H1 (cell line): ENCODE measurements at regions of chr2 and their contacts with region 1.

Region 1: DNA sequence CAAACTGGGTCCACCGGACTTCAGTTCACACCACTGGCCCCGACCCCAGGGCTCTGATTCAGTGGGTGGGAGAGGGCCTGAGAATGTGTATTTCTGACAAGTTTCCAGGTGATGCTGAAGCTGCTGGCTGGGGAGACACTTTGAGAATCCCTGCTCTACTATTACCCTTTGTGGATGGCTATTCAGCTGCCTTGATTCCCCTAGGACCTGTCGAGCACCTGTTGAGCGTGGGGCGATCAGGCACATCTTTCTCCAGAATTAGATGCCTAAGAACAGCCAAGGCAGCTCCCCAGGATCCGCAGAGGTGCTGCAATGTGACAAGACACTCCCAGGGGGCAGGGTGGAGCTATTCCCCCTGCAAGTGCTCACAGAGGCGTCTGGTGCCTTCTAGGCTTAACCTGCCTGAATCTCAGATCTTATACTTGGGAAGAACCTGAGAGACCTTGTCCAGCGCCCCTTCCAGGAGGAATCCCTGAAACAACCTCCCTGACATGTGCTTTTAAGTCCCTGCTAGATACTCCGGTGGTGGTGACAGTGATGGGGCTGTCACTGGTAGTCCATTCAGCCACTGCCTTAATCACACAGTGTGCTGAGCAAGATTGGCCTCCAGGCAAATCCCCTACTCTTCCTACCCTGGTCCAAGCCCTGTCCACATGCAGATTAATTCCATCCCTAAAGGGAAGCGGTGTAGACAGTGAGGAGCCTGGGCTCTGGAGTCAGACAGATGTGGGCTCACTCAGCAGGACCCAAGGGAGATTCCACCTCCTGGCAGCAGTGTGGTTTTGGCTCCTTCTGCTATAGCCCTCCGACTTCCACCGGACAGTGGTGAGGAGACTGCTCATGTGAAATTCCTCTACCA is 43.4 kb upstream of the OTOF start:
- DNase-seq: peak; percentile 29 to 66
- H3K4me3 ChIP-seq: no peak overlapping the region
- H3K27ac ChIP-seq: no peak overlapping the region
- H3K4me1 ChIP-seq: no peaks in the 10 kb centered on the region
- H3K27me3 ChIP-seq: no peaks in the 10 kb centered on the region
- CTCF ChIP-seq: peak; percentile 78 to 81 (median 81)
- EP300 ChIP-seq: no peak
- POLR2A ChIP-seq: no peak
- RAD21 ChIP-seq: peak; percentile 70 to 78

Region 2: DNA sequence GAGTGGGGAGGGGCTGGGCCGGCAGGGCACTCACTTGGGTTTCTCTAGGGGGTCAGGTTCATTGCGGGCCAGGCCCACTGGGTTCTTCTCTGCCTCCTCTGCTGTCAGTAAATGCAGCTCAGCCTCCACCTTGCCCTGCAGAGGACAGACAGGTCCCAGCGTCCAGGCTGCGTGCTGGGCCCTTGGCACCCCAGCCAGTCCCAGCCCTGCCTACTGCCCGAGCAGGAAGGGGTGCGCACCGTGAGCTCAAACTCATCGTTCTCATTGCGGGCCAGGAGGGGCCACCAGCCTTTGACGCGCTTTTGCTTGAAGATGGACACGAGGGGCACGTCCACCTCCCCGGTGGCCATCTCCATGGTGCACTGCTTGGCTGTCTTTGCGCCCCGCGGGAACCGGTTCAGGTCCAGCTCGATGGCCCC is 60.7 kb before region 1 on chr2:
- CTCF ChIA-PET with region 1: no interaction called
- POLR2A ChIA-PET with region 1: no interaction called
- DNase-seq: no peak
- H3K4me3 ChIP-seq: no peak overlapping the region
- H3K27ac ChIP-seq: no peak overlapping the region
- H3K4me1 ChIP-seq: peaks cover 0 to 23% (median 3%) of the 10 kb centered on the region in 4 experiments; a peak in 6 of 7 replicates
- H3K27me3 ChIP-seq: no peaks in the 10 kb centered on the region
- CTCF ChIP-seq: no peak
- EP300 ChIP-seq: no peak
- POLR2A ChIP-seq: no peak
- RAD21 ChIP-seq: no peak

Region 3: GRCh38 chr2:26509141-26509540 is 12.1 kb before region 1 on chr2:
- CTCF ChIA-PET with region 1: interaction called, 51 read pairs
- POLR2A ChIA-PET with region 1: no interaction called
- DNase-seq: no peak
- H3K4me3 ChIP-seq: no peak overlapping the region
- H3K27ac ChIP-seq: no peak overlapping the region
- H3K4me1 ChIP-seq: peaks cover 0 to 2% (median under 1%) of the 10 kb centered on the region in 4 experiments; a peak in 1 of 7 replicates
- H3K27me3 ChIP-seq: peaks cover 0 to 12% (median 7%) of the 10 kb centered on the region in 4 experiments; a peak in 5 of 7 replicates
- CTCF ChIP-seq: no peak
- EP300 ChIP-seq: no peak
- POLR2A ChIP-seq: no peak
- RAD21 ChIP-seq: no peak

Region 4: GRCh38 chr2:26542194-26542455 is 20.8 kb after region 1 on chr2:
- CTCF ChIA-PET with region 1: interaction called, 23 read pairs
- POLR2A ChIA-PET with region 1: no interaction called
- DNase-seq: no peak
- H3K4me3 ChIP-seq: no peak overlapping the region
- H3K27ac ChIP-seq: no peak overlapping the region
- H3K4me1 ChIP-seq: peaks cover 3 to 7% (median 5%) of the 10 kb centered on the region in 4 experiments
- H3K27me3 ChIP-seq: no peaks in the 10 kb centered on the region; a peak in 1 of 7 replicates
- CTCF ChIP-seq: no peak
- EP300 ChIP-seq: no peak
- POLR2A ChIP-seq: no peak
- RAD21 ChIP-seq: no peak

Region 5: GRCh38 chr2:26561918-26562810 is 40.9 kb after region 1 on chr2:
- CTCF ChIA-PET with region 1: interaction called, 78 read pairs
- POLR2A ChIA-PET with region 1: interaction called, 3 read pairs
- DNase-seq: no peak
- H3K4me3 ChIP-seq: peak overlapping the region in 2 of 4 experiments; percentile 19 to 35; a peak in 3 of 8 replicates
- H3K27ac ChIP-seq: no peak overlapping the region
- H3K4me1 ChIP-seq: peaks cover 0 to 24% (median 11%) of the 10 kb centered on the region in 4 experiments; a peak in 6 of 7 replicates
- H3K27me3 ChIP-seq: peaks cover 0 to 20% (median 9%) of the 10 kb centered on the region in 4 experiments; a peak in 5 of 7 replicates
- CTCF ChIP-seq: no peak
- EP300 ChIP-seq: no peak
- POLR2A ChIP-seq: no peak
- RAD21 ChIP-seq: no peak